ENCODE measurements at regions of chr17 and their contacts with region 1.

Region 1: GRCh38 chr17:59859444-59860025 is 33.2 kb downstream of the TUBD1 start:
- DNase-seq: no peak

Region 2: DNA sequence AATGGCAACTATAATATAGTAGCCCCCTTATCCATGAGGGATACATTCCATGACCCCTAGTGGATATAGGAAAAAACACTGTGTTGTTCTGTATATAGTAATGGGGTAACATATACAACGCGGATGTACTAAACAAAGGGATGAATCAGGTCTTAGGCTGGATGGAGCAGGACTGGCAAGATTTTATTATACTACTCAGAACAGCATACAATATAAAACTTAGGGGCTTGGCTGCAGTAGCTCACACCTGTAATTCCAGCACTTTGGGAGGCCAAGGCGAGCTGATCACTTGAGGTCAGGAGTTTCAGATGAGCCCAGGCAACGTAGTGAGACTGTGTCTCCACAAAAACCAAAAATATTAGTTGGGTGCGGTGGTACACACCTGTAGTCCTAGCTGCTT is 125.3 kb before region 1 on chr17:
- intact Hi-C with region 1: no loop called
- DNase-seq: no peak

Region 3: DNA sequence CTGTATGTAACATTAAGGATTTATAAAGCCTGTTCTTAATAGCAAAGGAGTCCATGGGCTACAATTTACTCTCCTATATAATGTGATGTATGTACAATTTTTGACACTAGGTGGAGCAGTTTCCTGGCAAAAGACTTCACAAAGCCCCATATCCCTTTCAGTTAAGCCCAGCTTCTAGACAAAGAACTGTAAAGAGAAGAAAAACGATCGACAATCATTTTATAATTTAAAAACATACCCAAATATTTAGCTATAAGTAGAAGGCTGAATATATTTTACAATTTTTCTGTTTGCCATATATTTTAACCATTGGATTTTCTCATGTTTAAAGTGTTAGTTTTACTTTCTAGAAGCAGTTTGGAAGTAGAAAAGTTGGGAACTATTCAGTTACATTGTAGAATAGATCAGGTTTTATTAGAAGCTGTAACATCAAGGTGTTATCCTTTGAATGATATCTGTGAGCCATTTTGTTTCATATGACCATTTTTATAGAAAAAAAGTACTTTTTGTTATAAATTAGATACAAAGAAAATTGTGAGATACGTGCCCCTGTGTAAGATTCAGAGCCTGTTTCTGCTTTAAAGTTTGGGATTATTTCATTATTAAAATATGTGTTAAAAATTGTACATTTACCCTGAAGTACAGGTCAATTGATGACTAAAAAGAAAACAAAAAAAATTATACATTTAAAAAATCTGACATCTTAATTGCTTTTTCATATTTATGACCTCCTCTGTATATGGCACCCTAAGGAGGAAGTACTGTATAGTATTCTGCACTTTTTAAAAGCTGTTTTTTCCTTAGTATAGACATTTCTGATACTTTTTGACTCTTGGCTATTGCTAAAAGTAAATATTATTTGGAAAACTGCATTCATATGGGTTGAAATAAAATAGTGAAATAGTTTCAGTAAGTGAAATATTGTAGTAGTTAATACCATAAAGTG is 105.7 kb before region 1 on chr17:
- intact Hi-C with region 1: loop called (anchors 2 kb)
- DNase-seq: no peak